K562 (cell line): ENCODE measurements at regions of chrX and their contacts with region 1.

Region 1: DNA sequence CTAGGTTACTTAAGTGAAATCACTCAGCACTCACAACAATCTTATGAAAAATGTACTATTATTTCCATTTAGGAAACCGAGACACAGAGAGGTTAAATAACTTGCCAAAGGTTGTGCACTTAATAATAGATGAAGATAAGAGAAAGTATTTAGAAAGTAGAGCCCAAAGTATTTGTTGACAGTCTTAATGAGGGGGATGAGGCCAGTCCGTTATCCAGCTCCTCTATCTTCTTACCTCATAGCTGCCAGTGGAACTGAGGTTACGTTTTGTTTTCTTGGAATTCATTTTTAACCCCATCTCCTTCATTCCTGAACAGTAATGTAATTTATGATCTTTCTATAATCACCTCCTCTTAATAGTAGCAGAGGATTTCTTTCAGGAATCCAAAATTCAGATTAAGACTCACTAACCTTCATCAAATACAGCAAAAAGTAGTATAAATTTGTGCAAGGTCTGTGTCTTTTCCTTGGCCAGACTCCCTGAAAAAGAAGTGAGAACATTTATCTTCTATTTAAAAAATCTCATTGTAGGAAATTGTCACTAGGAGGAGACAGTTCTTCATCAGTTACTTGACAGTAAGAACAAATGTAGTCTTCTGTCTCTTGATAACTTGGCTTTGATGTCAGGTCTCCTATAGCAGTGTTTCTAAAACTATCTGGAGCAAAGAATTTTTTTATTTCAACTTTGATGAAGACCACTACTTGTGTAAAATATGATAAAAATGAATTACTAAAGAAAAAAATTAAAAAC is 35.5 kb downstream of the F8 start:
- DNase-seq: no peak
- ATAC-seq: 0 out of 3 replicates have a peak, but pooled peaks have one; percentile 46
- H3K4me3 ChIP-seq: no peak overlapping the region
- H3K27ac ChIP-seq: no peak overlapping the region
- H3K4me1 ChIP-seq: 0 out of 5 replicates have a peak, but pooled peaks cover 0 to 3% of the 10 kb centered on the region in 2 experiments
- H3K27me3 ChIP-seq: no peaks in the 10 kb centered on the region
- CTCF ChIP-seq: peak in 2 of 3 experiments; percentile 30 to 61; a peak in 3 of 6 replicates
- EP300 ChIP-seq: no peak
- POLR2A ChIP-seq: no peak
- RAD21 ChIP-seq: peak; percentile 68 to 79

Region 2: DNA sequence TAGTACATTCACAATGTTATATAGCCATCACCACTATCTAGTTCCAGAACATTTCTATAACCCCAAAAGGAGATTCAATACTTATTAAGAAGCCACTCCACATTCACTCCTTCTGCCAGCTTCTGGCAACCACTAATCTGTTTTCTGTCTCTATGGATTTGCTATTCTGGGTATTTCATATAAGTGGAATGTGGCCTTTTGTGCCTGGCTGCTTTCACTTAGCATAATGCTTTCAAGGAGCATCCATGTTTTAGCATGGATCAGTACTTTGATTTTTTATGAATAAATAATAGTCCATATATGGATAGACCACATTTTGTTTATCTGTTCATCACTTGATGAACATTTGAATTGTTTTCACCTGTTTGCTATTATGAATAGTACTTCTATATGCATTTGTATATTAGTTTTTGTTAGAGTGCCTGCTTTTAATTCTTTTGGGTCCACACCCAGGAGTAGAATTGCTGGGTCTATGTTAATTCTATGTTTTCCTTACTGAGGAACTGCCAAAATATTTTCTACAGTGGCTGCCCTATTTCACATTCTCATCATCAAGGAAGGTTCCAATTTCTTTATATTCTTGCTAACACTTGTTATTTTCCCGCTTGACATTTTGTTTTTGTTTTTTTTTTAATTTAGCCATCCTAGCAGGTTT is 135.9 kb before region 1 on chrX:
- CTCF ChIA-PET with region 1: no interaction called
- POLR2A ChIA-PET with region 1: no interaction called
- in situ Hi-C with region 1: no loop called
- intact Hi-C with region 1: no loop called
- DNase-seq: no peak
- ATAC-seq: no peak
- H3K4me3 ChIP-seq: no peak overlapping the region
- H3K27ac ChIP-seq: no peak overlapping the region
- H3K4me1 ChIP-seq: no peaks in the 10 kb centered on the region; a peak in 1 of 5 replicates
- H3K27me3 ChIP-seq: no peaks in the 10 kb centered on the region
- CTCF ChIP-seq: no peak
- EP300 ChIP-seq: no peak
- POLR2A ChIP-seq: no peak
- RAD21 ChIP-seq: no peak

Region 3: DNA sequence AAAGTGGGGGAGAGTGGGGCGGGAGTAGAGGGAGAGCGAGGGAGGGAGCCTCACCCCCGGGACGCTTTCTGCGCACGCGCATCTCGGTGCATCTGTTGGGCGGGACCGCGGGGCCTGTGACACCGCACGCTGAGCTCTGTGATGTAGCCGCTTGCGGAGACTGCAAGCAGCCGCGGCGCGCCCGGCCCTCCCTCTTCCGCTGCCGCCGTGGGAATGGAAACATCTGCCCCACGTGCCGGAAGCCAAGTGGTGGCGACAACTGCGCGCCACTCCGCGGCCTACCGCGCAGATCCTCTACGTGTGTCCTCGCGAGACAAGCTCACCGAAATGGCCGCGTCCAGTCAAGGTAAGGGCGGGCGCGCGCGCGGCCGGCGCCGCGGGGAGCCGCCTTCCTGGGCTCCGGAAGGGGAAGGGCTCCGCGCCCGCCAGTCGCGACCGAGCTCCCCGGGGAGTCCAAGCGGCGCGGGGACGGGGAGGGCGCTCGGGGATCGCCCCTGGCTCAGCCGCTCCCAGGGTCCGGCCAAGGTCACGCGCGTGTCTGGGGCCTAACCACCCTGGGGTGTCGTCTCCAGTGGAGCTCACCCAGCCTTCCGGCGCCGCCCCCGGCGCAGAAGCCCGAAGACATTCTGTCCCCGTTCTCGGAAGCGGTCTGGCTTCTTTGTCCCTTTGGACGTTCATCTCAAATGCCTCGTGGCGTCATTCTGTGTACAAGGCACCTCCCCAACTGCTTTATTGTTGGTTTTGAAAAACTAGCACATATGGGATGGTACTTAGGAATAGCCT is 39.9 kb after region 1 on chrX and contains the start of gene FUNDC2:
- CTCF ChIA-PET with region 1: no interaction called
- POLR2A ChIA-PET with region 1: interaction called, 5 read pairs
- in situ Hi-C with region 1: no loop called
- intact Hi-C with region 1: loop called (anchors 2 kb)
- DNase-seq: peak; percentile 91 to 97 (median 94)
- ATAC-seq: peak; percentile 87
- H3K4me3 ChIP-seq: peak within 1 kb of the TSS; percentile 51
- H3K27ac ChIP-seq: peak within 1 kb of the TSS; percentile 95
- H3K4me1 ChIP-seq: peaks cover 14 to 29% of the 10 kb centered on the region in 2 experiments
- H3K27me3 ChIP-seq: no peaks in the 10 kb centered on the region
- CTCF ChIP-seq: no peak
- EP300 ChIP-seq: no peak; the same call in 1 of the 2 replicates
- POLR2A ChIP-seq: peak; percentile 83
- RAD21 ChIP-seq: no peak
- polyA plus RNA-seq, gene FUNDC2: 146 to 185 TPM

Region 4: DNA sequence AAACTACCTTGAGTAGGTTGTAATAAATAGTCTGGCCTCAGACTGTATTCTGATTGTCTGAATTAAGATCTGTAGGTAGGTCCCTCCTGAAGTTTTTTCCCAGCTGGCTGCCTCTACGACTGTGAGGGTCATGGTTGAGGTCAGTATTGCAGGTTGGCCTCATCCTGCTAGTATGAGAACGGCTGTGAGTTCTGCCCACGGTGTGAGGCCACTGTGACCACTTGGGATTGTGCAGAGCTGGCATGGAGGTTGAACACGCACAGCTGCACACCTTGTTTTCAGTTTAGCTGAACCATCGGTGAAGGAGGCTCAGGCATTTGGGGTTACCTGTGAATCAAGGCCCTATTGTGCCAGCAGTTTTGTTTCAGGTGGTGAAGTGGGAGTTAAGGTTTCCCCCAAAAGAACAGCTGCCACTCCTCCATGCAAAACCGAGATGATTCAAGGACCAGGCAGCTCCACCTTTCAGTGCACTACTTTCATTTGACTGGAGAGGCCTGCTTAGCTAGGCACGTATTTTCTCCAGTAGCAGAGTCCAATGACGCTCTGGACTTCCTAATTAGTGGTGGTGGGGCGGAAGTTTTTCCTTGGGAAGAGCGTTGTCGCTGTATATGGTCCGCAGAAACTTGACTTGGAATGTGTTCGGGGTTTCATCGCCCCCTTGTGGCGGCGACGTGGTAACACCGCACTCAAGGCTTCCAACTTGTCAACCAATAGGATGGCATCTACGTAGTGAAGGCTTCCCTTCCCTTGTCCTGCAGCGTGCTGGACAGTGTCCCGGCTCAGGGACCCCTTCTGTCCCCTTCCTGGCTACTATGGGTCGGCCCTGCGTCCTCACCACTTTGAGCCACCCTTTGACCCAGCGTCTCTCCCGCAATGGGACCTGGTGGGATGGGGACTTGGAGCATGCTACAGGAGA is 70.1 kb after region 1 on chrX:
- CTCF ChIA-PET with region 1: interaction called, 21 read pairs
- POLR2A ChIA-PET with region 1: interaction called, 4 read pairs
- in situ Hi-C with region 1: loop called (anchors 5 kb)
- intact Hi-C with region 1: loop called (anchors 1 kb)
- DNase-seq: peak; percentile 52 to 82 (median 65)
- ATAC-seq: peak; percentile 97
- H3K4me3 ChIP-seq: no peak overlapping the region
- H3K27ac ChIP-seq: no peak overlapping the region
- H3K4me1 ChIP-seq: peaks cover 0 to 9% of the 10 kb centered on the region in 2 experiments; a peak in 3 of 5 replicates
- H3K27me3 ChIP-seq: no peaks in the 10 kb centered on the region
- CTCF ChIP-seq: peak; percentile 72 to 84 (median 76)
- EP300 ChIP-seq: no peak
- POLR2A ChIP-seq: no peak
- RAD21 ChIP-seq: peak; percentile 65 to 80